Activated T-helper 2 cell treated with anti-CD3 and anti-CD28 coated beads, Interferon-gamma antibody, Interleukin-2, Interleukin-4, amounts not matched to agents 10 μg/mL and 5 μg/mL and 100 μg/mL, durations not matched to agents 14 hours and 24 hours and 36 hours (primary cell): ENCODE measurements at regions of chr3 and their contacts with region 1.

Region 1: DNA sequence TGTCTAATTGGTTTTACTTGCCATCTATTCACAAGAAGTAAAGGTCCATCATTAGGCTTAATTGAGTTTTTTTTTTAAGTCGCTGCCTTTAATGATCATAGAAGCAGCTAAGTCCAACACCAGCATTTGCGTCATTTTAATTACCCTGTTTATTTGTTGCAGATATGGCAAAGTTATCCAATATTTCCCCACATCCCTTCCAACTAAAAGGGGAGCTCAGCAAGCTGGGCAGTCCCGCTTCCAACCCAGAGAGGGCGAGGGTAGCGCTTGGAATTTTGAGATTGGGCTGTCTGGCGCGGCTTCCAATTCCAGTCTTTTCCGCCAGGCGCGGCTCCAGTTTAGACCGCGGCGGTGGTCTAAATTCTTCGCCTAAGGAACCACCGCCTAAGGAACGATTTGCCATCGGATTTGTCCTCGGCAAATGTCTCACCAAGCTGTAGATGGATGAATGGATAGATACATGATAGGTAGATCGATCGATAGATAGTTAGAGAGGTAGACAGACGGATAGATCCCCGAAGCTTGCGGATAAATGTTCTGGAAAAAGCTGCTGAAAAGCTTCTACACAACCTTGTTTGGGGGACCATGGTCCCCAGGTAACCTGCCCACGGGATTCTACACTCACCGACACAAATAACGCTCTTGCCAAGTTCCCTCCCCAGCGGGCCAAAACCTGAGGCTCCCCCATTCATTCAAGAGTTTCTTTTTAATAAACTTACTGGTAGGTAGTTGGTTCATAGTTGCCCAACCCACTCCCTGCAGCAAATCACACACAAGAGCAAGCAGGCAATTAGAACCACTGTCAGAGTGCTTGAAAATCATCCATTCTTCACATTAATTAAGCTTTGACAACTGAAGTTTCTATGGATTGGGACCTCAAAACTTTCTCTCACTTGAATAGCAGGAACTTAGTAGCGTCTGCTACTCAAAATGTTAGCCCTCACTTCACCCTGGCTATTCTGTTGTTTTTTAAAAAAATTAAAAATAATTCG is 49.1 kb downstream of the ZIC4 start:
- DNase-seq: no peak
- H3K4me3 Mint-ChIP-seq: no peak overlapping the region
- H3K27ac Mint-ChIP-seq: no peak overlapping the region
- H3K4me1 Mint-ChIP-seq: no peaks in the 10 kb centered on the region
- H3K27me3 Mint-ChIP-seq: peaks cover 76% of the 10 kb centered on the region

Region 2: GRCh38 chr3:147298511-147298982 is 58.7 kb before region 1 on chr3:
- intact Hi-C with region 1: no loop called
- DNase-seq: no peak
- H3K4me3 Mint-ChIP-seq: no peak overlapping the region
- H3K27ac Mint-ChIP-seq: no peak overlapping the region
- H3K4me1 Mint-ChIP-seq: no peaks in the 10 kb centered on the region
- H3K27me3 Mint-ChIP-seq: no peaks in the 10 kb centered on the region

Region 3: GRCh38 chr3:147389717-147390116 is 32.5 kb after region 1 on chr3:
- intact Hi-C with region 1: loop called (anchors 2 kb)
- DNase-seq: no peak
- H3K4me3 Mint-ChIP-seq: no peak overlapping the region
- H3K27ac Mint-ChIP-seq: no peak overlapping the region
- H3K4me1 Mint-ChIP-seq: no peaks in the 10 kb centered on the region
- H3K27me3 Mint-ChIP-seq: peaks cover 75% of the 10 kb centered on the region

Region 4: GRCh38 chr3:147421184-147421912 is 64.1 kb after region 1 on chr3:
- intact Hi-C with region 1: loop called (anchors 2 kb)
- DNase-seq: no peak
- H3K4me3 Mint-ChIP-seq: no peak overlapping the region
- H3K27ac Mint-ChIP-seq: no peak overlapping the region
- H3K4me1 Mint-ChIP-seq: no peaks in the 10 kb centered on the region
- H3K27me3 Mint-ChIP-seq: peaks cover 72% of the 10 kb centered on the region

Region 5: GRCh38 chr3:147507638-147508286 is 150.6 kb after region 1 on chr3:
- intact Hi-C with region 1: no loop called
- DNase-seq: no peak
- H3K4me3 Mint-ChIP-seq: no peak overlapping the region
- H3K27ac Mint-ChIP-seq: no peak overlapping the region
- H3K4me1 Mint-ChIP-seq: no peaks in the 10 kb centered on the region
- H3K27me3 Mint-ChIP-seq: no peaks in the 10 kb centered on the region